GM10248 (cell line): ENCODE measurements at regions of chr10 and their contacts with region 1.

Region 1: GRCh38 chr10:114388275-114388674 is 16.0 kb downstream of the AFAP1L2 start:
- DNase-seq: peak; percentile 63
- CTCF ChIP-seq: no peak

Region 2: DNA sequence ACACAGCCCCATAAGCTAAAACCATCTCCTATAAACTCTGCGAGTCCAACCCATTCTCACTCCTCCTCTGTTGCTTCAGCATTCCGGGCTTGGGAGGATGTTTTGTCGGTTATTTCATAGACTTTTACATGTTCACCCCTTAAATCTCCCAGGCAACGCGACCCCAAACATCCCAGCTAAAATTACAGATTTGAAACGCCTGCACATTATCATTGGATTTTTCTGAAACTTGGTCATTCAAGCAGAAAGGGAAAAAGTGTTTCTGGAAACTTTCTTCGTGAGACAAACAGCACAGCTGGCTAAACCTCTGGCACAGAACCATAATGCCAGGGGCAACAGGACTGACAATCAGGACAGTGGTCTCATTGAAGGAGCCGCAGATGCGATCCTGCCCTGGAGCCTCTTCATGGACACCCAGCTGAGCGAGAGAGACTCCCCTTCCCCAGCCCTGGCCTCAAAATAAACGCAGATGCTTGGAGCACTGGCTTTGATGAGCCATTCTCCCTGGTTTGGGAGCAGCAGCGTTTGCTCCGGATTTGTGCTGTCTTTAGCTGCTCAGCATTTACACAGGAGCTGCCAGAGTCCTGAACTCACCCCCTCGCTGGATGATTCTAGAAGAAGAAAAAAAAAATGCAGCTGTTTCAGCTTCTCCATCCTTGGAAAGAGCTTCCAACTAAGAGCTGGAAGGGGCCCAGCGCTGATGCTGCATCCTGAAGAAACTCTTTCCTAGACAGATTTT is 14.1 kb before region 1 on chr10:
- CTCF ChIA-PET with region 1: interaction called, 23 read pairs
- POLR2A ChIA-PET with region 1: interaction called, 3 read pairs
- DNase-seq: no peak
- CTCF ChIP-seq: no peak

Region 3: GRCh38 chr10:114403541-114404161 is 15.4 kb after region 1 on chr10:
- CTCF ChIA-PET with region 1: interaction called, 19 read pairs
- POLR2A ChIA-PET with region 1: interaction called, 3 read pairs
- DNase-seq: peak; percentile 47
- CTCF ChIP-seq: peak; percentile 36